Common myeloid progenitor, CD34-positive (primary cell): ENCODE measurements at regions of chr10 and their contacts with region 1.

Region 1: DNA sequence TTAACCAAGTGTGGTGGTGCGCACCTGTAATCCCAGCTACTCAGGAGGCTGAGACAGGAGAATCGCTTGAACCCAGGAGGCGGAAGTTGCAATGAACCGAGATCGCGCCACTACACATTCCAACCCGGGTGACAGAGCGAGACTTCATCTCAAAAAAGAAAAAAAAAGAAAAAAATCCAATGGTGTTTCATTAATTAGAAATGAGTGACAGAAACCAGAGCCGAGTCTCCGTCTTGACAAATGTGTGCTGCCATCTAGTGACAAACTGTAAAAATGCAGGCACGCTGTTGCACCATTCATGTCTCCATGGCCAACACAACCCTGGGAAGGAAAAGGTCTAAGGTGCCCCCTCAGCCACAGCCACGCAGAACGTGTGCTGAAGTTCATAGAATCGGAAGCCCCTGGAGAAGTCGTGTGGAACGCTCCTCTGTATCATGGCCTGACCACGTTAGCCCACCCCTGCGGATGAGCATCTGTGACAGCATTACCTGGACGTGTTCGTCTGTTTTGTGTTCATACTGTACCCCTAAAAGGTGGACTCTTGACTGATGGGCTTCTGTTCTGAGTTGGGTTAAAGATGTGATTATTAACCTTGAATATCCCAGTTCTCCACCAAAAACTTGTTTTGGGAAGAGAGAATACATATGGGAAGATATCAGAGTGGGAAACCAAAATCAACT is 94.9 kb downstream of the LYZL2 start:
- DNase-seq: peak; percentile 84 to 92 (median 89)
- H3K4me3 ChIP-seq: no peak overlapping the region
- H3K27ac ChIP-seq: no peak overlapping the region
- H3K4me1 ChIP-seq: peaks cover 15 to 79% (median 49%) of the 10 kb centered on the region in 4 experiments
- H3K27me3 ChIP-seq: no peaks in the 10 kb centered on the region

Region 2: GRCh38 chr10:29119374-29119773 is 1415.2 kb before region 1 on chr10:
- CTCF ChIA-PET with region 1: no interaction called
- POLR2A ChIA-PET with region 1: no interaction called
- DNase-seq: peak in 1 of 3 donors; percentile 29
- H3K4me3 ChIP-seq: no peak overlapping the region
- H3K27ac ChIP-seq: no peak overlapping the region
- H3K4me1 ChIP-seq: no peaks in the 10 kb centered on the region
- H3K27me3 ChIP-seq: no peaks in the 10 kb centered on the region

Region 3: GRCh38 chr10:30413996-30414576 is 120.5 kb before region 1 on chr10:
- CTCF ChIA-PET with region 1: interaction called, 55 read pairs
- POLR2A ChIA-PET with region 1: interaction called, 3 read pairs
- DNase-seq: peak; percentile 59 to 82 (median 79)
- H3K4me3 ChIP-seq: no peak overlapping the region
- H3K27ac ChIP-seq: no peak overlapping the region
- H3K4me1 ChIP-seq: peaks cover 5 to 24% (median 14%) of the 10 kb centered on the region in 4 experiments
- H3K27me3 ChIP-seq: no peaks in the 10 kb centered on the region

Region 4: DNA sequence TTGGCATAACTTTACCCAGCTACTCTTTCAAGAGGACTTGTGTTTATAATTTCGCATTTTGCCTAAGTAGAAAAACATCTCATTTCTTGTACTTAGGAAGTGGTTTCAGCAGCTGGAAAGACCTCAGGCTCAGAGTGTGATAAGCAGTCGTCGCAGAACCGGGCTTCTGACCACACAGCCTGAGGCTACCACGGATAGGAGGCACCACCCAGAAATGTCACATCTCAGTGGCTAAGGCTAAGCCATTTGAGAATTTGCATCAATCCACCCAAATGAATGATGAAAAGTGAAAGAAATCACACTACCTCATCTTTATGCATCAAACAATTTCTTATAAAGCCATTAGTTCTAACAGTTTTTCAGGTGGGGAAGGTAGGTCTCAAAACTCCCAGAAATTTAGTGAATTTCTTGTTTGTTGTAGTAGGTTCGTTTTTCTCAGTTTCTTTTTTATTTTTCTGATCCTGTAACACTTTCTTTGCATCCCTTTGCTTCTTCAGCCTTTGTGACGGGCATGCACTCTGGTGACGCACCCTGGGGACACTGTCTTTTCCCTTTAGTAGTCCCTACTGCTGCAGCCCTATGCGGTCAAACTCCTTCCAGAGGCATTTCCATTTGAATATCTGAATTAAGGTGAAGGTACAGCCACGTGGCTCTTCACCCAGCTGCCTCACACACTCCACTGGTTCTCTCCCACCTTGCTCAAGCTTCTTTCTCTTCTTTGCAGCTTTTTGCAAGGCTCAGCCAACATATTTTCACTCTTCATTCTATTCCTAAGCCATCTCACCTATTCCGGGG is 32.1 kb before region 1 on chr10:
- CTCF ChIA-PET with region 1: interaction called, 23 read pairs
- POLR2A ChIA-PET with region 1: interaction called, 3 read pairs
- DNase-seq: peak; percentile 78 to 95 (median 93)
- H3K4me3 ChIP-seq: peak overlapping the region in 4 of 7 experiments; percentile 23 to 37 (median 32)
- H3K27ac ChIP-seq: peak overlapping the region; percentile 21 to 64
- H3K4me1 ChIP-seq: peaks cover 41 to 90% (median 78%) of the 10 kb centered on the region in 4 experiments
- H3K27me3 ChIP-seq: no peaks in the 10 kb centered on the region

Region 5: GRCh38 chr10:30583778-30584415 is 49.3 kb after region 1 on chr10:
- CTCF ChIA-PET with region 1: interaction called, 15 read pairs
- POLR2A ChIA-PET with region 1: no interaction called
- DNase-seq: peak; percentile 31 to 60 (median 58)
- H3K4me3 ChIP-seq: peak overlapping the region in 6 of 7 experiments; percentile 46 to 82 (median 56)
- H3K27ac ChIP-seq: peak overlapping the region; percentile 46 to 81
- H3K4me1 ChIP-seq: peaks cover 9 to 37% (median 23%) of the 10 kb centered on the region in 4 experiments
- H3K27me3 ChIP-seq: no peaks in the 10 kb centered on the region

Region 6: DNA sequence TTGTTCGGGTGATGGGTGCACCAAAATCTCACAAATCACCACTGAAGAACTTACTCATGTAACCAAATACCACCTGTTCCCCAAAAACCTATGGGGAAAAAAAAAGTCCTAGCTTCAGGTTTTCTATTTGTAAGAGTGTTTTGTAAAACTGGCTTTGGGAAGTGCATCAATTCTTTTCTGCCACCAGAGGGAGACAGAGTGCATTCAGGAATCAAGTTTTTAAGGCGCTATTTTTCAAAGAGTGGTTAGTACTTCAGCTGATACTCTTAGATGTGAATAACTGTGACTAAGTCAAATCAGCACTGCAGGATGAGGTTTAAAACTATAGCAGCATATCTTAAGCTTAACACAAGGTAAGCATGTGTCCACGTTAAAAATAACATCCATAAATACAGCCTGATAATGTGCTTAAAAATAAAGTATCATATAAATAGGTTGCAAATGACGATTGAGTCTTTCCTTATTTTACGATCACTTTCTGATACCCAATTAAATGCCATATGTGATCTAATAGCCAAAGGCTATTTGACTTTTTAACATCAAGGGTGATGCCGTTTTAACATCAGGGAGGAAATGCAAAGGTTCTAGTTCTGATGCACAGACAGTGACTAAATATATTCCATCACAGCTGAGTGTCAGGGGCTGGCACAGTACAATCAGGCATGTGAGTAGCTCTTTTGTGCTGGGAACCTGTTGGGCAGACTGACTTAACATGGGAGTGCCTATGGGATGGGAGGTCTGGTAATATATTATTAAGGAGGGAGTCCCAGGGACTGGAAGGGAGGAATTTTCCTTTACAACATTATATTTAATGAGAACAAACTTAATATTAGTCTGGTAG is 105.6 kb after region 1 on chr10:
- CTCF ChIA-PET with region 1: no interaction called
- POLR2A ChIA-PET with region 1: no interaction called
- DNase-seq: peak; percentile 64 to 86 (median 76)
- H3K4me3 ChIP-seq: no peak overlapping the region
- H3K27ac ChIP-seq: no peak overlapping the region
- H3K4me1 ChIP-seq: no peaks in the 10 kb centered on the region
- H3K27me3 ChIP-seq: peaks cover 3 to 42% (median 13%) of the 10 kb centered on the region in 5 experiments